AG04450 (cell line): ENCODE measurements at regions of chr19 and their contacts with region 1.

Region 1: GRCh38 chr19:46975925-46976782 is 43.5 kb upstream of the NPAS1 start:
- DNase-seq: peak; percentile 73
- H3K4me3 ChIP-seq: no peak overlapping the region
- H3K27ac ChIP-seq: peak overlapping the region; percentile 91
- H3K27me3 ChIP-seq: no peaks in the 10 kb centered on the region
- CTCF ChIP-seq: no peak

Region 2: GRCh38 chr19:46856050-46857022 is 119.8 kb before region 1 on chr19:
- CTCF ChIA-PET with region 1: interaction called, 7 read pairs
- POLR2A ChIA-PET with region 1: interaction called, 14 read pairs
- DNase-seq: peak; percentile 89
- H3K4me3 ChIP-seq: peak overlapping the region; percentile 55
- H3K27ac ChIP-seq: peak overlapping the region; percentile 97
- H3K27me3 ChIP-seq: no peaks in the 10 kb centered on the region
- CTCF ChIP-seq: peak; percentile 85

Region 3: DNA sequence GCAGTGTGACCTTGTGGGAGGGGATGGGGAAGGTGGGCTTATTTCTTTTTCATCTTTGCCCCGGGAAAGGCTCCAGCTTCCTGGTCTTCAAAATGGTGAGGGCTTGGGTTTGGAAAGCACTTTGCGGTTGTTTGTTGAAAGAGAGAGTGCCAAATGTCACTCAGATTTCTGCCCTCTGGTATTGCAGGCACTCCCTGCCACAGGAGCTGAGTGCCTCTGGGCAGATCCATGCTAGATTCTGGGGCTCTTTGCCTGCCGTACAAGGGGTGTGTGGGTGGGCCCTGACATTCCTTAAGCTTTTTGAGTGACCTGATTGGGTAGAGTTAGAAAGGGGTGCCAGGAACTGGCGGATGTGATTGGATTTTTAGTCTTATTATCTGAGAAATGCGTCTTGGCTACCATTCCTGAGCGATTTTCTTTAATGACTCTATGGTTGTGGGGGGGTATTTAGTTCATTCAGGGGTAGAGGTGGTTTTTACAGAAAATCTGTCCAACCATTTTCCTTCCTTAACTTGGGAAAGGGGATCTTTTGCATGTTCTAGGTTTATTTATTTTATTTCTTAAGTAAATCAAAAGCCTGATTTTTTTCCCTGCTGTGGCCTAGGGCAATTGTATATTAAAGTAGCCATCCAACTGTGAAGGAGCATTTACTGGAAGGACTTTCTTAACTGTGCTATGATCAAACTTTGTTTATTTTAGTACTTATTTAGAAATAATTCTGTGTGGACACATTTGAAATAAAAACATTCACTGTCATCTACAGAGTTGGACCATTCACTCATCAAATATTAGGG is 112.1 kb before region 1 on chr19:
- CTCF ChIA-PET with region 1: interaction called, 3 read pairs
- POLR2A ChIA-PET with region 1: interaction called, 19 read pairs
- DNase-seq: no peak
- H3K4me3 ChIP-seq: peak overlapping the region; percentile 83
- H3K27ac ChIP-seq: peak overlapping the region; percentile 57
- H3K27me3 ChIP-seq: no peaks in the 10 kb centered on the region
- CTCF ChIP-seq: no peak

Region 4: DNA sequence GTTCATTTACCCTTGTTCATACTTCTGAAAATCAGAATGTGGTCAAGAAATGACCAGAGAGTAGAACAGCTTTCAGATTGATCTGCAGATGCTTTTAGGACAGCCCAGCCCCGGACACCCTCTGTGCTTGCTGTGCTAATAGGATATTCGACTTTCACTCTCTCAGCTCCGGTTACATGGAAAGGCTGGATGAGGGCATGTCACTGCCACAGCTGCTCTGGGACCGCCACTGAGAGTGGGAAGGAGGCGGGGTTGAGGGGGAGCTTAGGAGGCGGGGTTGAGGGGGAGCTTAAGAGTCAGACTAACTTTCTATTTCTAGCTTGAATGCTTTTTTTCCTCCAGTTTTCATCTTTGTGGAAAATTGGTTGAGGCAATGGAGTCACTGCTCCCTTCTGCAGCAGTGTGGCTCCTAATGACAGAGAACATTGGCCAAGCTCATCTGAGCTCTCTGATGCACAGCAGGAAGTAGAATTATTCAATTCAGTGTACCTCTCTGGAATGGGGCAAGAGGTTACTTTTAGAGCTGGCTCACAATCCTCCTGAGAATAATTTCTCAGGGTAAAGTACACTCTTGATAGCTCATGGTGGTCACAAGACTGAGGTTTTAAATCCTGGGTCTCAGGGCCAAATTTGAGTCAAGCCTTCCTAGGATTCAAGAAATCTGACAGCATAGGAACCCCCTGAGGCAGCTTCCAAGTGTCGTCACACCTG is 31.1 kb before region 1 on chr19:
- CTCF ChIA-PET with region 1: no interaction called
- POLR2A ChIA-PET with region 1: interaction called, 10 read pairs
- DNase-seq: no peak
- H3K4me3 ChIP-seq: no peak overlapping the region
- H3K27ac ChIP-seq: no peak overlapping the region
- H3K27me3 ChIP-seq: no peaks in the 10 kb centered on the region
- CTCF ChIP-seq: no peak

Region 5: DNA sequence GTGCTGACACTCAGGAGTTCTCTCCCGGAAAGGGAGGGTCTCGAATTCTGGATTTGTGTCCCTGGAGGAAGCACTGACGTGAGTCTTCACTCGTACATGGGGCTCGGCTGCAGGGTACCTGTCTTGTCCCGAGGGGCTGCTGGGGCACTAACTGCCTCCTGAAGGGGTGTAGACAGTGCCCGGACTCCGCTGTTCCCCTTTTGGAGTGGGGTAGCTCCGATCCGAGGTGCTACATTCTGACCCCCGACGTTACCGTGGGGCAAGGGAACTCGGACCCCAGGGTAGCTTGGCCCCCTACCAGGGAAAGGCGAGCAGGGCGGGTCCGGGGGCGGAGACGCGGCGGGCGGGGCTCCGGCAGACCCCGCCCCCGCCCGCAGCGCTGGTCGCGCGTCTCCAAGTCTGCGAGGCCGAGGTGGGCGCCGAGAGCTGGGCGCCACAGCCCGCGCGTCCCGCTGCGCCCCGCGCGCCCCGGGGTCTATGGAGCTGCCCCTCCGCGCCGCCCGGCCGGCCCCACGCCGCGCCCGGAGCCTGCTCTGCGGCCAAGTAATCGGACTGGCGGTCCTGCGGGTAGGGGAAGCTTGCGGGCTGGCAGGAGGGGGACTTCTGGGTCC is 43.4 kb after region 1 on chr19 and contains the start of gene NPAS1:
- CTCF ChIA-PET with region 1: no interaction called
- POLR2A ChIA-PET with region 1: no interaction called
- DNase-seq: no peak
- H3K4me3 ChIP-seq: peak within 1 kb of the TSS; percentile 27
- H3K27ac ChIP-seq: no peak within 1 kb of the TSS
- H3K27me3 ChIP-seq: peaks cover 49% of the 10 kb centered on the region
- CTCF ChIP-seq: no peak
- polyA plus RNA-seq, gene NPAS1: 0.30 and 0.36 TPM in 2 replicates

Region 6: GRCh38 chr19:47107202-47107940 is 131.2 kb after region 1 on chr19:
- CTCF ChIA-PET with region 1: no interaction called
- POLR2A ChIA-PET with region 1: no interaction called
- DNase-seq: no peak
- H3K4me3 ChIP-seq: no peak overlapping the region
- H3K27ac ChIP-seq: peak overlapping the region; percentile 21
- H3K27me3 ChIP-seq: no peaks in the 10 kb centered on the region
- CTCF ChIP-seq: no peak